K562 (cell line): ENCODE measurements at regions of chr16 and their contacts with region 1.

Region 1: GRCh38 chr16:47873434-47873833 is 282.4 kb downstream of the ABCC12 start:
- DNase-seq: peak; percentile 19 to 37 (median 28)
- ATAC-seq: peak; percentile 90
- H3K4me3 ChIP-seq: no peak overlapping the region
- H3K27ac ChIP-seq: no peak overlapping the region
- H3K4me1 ChIP-seq: no peaks in the 10 kb centered on the region
- H3K27me3 ChIP-seq: no peaks in the 10 kb centered on the region
- CTCF ChIP-seq: peak; percentile 58 to 62 (median 62)
- EP300 ChIP-seq: no peak
- POLR2A ChIP-seq: no peak
- RAD21 ChIP-seq: peak in 1 of 2 experiments; percentile 54; a peak in 2 of 4 replicates

Region 2: DNA sequence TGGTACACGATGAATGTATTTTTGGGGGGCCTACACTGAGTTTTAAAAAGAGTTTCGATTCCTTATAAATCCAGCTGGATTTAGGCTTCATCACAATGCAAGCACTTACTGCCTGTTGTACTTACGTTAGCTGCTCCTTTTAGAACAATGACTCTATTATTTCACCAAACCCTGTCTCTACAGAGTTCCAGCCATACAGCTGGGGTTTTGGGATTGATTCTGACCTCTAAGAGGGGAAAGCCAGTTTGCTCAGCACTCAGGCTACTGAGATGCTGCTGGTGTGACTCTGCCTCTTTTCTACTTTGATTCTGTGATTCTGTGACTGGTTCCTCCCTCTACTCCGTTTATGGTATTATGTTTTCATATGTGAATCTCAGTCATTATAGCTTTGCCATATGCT is 47.4 kb before region 1 on chr16:
- CTCF ChIA-PET with region 1: no interaction called
- POLR2A ChIA-PET with region 1: no interaction called
- in situ Hi-C with region 1: no loop called
- intact Hi-C with region 1: no loop called
- DNase-seq: no peak
- ATAC-seq: no peak
- H3K4me3 ChIP-seq: no peak overlapping the region
- H3K27ac ChIP-seq: no peak overlapping the region
- H3K4me1 ChIP-seq: no peaks in the 10 kb centered on the region
- H3K27me3 ChIP-seq: no peaks in the 10 kb centered on the region
- CTCF ChIP-seq: no peak
- EP300 ChIP-seq: no peak
- POLR2A ChIP-seq: no peak
- RAD21 ChIP-seq: no peak

Region 3: GRCh38 chr16:48117217-48118105 is 244.0 kb after region 1 on chr16:
- CTCF ChIA-PET with region 1: no interaction called
- POLR2A ChIA-PET with region 1: no interaction called
- in situ Hi-C with region 1: no loop called
- intact Hi-C with region 1: loop called (anchors 2 kb)
- DNase-seq: peak; percentile 81 to 98 (median 93)
- ATAC-seq: peak; percentile 100
- H3K4me3 ChIP-seq: no peak overlapping the region
- H3K27ac ChIP-seq: no peak overlapping the region
- H3K4me1 ChIP-seq: peaks cover 0 to 10% of the 10 kb centered on the region in 2 experiments; a peak in 1 of 5 replicates
- H3K27me3 ChIP-seq: peaks cover 0 to 24% of the 10 kb centered on the region in 2 experiments; a peak in 1 of 5 replicates
- CTCF ChIP-seq: peak; percentile 96 to 99 (median 98)
- EP300 ChIP-seq: no peak
- POLR2A ChIP-seq: no peak
- RAD21 ChIP-seq: peak in 1 of 2 experiments; percentile 68; a peak in 2 of 4 replicates